ENCODE measurements at regions of chr2 and their contacts with region 1.

Region 1: DNA sequence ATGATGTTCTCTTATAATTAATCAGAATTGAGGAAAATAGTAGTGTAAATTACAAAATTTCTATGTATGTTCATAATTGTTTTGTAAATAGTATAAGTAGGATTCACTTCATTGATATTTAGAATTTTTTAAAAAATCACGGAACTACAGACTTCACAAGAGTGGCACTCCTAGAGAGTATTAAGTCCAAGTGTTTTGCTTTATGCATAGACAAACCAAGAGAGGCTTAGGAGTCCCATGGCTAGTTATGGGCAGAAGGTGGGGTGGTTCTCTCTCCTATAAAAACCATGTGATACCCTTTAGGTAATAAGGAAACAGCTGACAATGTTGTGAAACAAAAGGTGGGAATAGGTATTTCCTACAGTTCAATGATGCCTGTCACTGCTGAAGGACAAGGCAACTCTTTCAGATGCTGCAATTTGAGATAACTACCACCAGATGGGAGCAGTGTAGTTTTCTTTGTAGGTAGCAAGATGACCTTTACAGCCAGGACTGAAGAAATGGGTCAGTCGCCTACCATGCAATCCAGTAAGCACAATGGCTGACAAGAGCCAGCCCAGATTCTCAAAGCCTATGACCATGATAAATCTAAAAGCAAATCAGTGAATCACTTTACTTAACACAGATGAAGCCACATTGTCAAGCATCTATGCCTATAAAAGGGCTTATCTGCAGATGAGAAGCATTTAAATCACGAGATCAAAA is 83.9 kb downstream of the AAK1 start:
- DNase-seq: no peak
- ATAC-seq: peak; percentile 94
- H3K4me3 ChIP-seq: no peak overlapping the region
- H3K27ac ChIP-seq: no peak overlapping the region
- H3K4me1 ChIP-seq: peaks cover 9% of the 10 kb centered on the region
- H3K27me3 ChIP-seq: no peaks in the 10 kb centered on the region
- CTCF ChIP-seq: peak; percentile 74 to 85 (median 77)
- EP300 ChIP-seq: no peak
- POLR2A ChIP-seq: no peak
- RAD21 ChIP-seq: peak; percentile 93

Region 2: DNA sequence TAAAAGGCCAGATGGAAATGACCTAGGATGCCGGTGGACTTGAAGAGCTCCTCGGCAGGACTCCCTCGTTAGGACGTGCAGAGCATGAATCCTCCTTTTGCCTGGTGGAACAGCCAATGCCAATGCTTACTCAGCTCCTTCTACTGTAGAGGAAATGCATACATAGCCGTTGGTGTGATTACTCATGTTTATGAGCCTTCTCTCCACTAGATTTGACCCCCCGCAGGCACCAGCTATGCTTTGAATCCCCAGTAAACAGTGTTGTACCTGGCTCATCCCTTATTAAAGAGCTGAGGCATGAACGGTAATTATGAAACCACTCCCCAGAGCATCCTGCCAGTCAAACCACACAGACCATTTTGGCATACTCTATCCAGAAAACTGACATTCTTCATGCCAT is 373.8 kb before region 1 on chr2:
- CTCF ChIA-PET with region 1: no interaction called
- POLR2A ChIA-PET with region 1: no interaction called
- RAD21 ChIA-PET with region 1: no interaction called
- SMC1A ChIA-PET with region 1: no interaction called
- in situ Hi-C with region 1: no loop called
- intact Hi-C with region 1: no loop called
- DNase-seq: no peak
- ATAC-seq: no peak
- H3K4me3 ChIP-seq: no peak overlapping the region
- H3K27ac ChIP-seq: no peak overlapping the region
- H3K4me1 ChIP-seq: no peaks in the 10 kb centered on the region
- H3K27me3 ChIP-seq: peaks cover 2 to 3% of the 10 kb centered on the region in 2 experiments
- CTCF ChIP-seq: no peak
- EP300 ChIP-seq: no peak
- POLR2A ChIP-seq: no peak
- RAD21 ChIP-seq: no peak

Region 3: DNA sequence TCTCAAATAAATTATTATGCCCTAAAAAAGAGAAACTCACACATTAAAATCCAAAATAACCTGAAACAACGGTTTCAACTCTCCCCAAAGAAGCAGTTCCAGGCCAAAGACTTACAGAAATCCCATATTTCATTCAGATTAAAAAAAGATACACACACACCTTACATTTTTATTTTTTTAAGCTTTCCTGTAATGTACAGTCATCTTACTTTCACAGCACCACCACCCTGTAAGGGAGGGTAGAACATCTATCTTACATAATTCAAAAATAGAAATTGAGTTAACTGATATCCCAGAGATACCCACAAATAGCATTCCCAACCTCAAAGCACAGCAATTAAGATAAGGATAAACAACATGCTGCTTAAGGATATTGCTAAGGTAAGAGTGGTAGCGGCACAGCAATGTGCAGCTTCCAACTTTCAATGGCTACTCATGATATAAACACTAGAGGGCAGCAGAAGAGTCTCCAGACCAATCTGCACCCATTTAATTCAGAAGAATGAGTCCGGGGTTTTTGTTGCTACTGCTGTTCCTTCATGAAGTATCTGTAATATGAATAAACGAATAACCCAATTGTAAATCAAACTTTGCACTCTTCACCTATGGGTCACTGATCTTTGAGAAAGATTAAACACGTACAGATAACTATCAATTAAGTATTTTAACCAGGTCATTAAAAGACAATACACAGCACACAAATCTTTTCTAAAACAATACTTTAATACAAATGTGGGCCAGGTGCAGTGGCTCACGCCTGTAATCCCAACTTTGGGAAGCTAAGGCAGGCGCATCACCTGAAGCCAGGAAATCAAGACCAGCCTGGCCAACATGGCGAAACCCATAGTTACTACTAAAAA is 183.9 kb before region 1 on chr2:
- CTCF ChIA-PET with region 1: interaction called, 91 read pairs
- POLR2A ChIA-PET with region 1: interaction called, 3 read pairs
- RAD21 ChIA-PET with region 1: interaction called, 46 read pairs
- SMC1A ChIA-PET with region 1: interaction called, 48 read pairs
- in situ Hi-C with region 1: no loop called
- intact Hi-C with region 1: no loop called
- DNase-seq: no peak
- ATAC-seq: peak; percentile 90
- H3K4me3 ChIP-seq: no peak overlapping the region
- H3K27ac ChIP-seq: no peak overlapping the region
- H3K4me1 ChIP-seq: no peaks in the 10 kb centered on the region
- H3K27me3 ChIP-seq: no peaks in the 10 kb centered on the region
- CTCF ChIP-seq: peak; percentile 49 to 63 (median 62); a peak in 5 of 6 replicates
- EP300 ChIP-seq: no peak
- POLR2A ChIP-seq: no peak
- RAD21 ChIP-seq: peak; percentile 61

Region 4: GRCh38 chr2:69572641-69573040 is 13.0 kb after region 1 on chr2:
- CTCF ChIA-PET with region 1: interaction called, 176 read pairs
- POLR2A ChIA-PET with region 1: no interaction called
- RAD21 ChIA-PET with region 1: interaction called, 9 read pairs
- SMC1A ChIA-PET with region 1: interaction called, 15 read pairs
- in situ Hi-C with region 1: no loop called
- intact Hi-C with region 1: no loop called
- DNase-seq: no peak
- ATAC-seq: no peak
- H3K4me3 ChIP-seq: no peak overlapping the region
- H3K27ac ChIP-seq: no peak overlapping the region
- H3K4me1 ChIP-seq: no peaks in the 10 kb centered on the region
- H3K27me3 ChIP-seq: no peaks in the 10 kb centered on the region
- CTCF ChIP-seq: no peak
- EP300 ChIP-seq: no peak
- POLR2A ChIP-seq: no peak
- RAD21 ChIP-seq: no peak

Region 5: GRCh38 chr2:69581774-69582581 is 22.4 kb after region 1 on chr2:
- CTCF ChIA-PET with region 1: interaction called, 144 read pairs
- POLR2A ChIA-PET with region 1: interaction called, 7 read pairs
- RAD21 ChIA-PET with region 1: interaction called, 7 read pairs
- SMC1A ChIA-PET with region 1: interaction called, 30 read pairs
- in situ Hi-C with region 1: no loop called
- intact Hi-C with region 1: no loop called
- DNase-seq: peak; percentile 40
- ATAC-seq: peak; percentile 64
- H3K4me3 ChIP-seq: peak overlapping the region; percentile 44; the same call in 1 of the 2 replicates
- H3K27ac ChIP-seq: peak overlapping the region; percentile 28
- H3K4me1 ChIP-seq: peaks cover 28% of the 10 kb centered on the region
- H3K27me3 ChIP-seq: no peaks in the 10 kb centered on the region
- CTCF ChIP-seq: no peak
- EP300 ChIP-seq: no peak
- POLR2A ChIP-seq: no peak
- RAD21 ChIP-seq: no peak

Region 6: GRCh38 chr2:69704446-69704845 is 144.9 kb after region 1 on chr2:
- CTCF ChIA-PET with region 1: interaction called, 12 read pairs
- POLR2A ChIA-PET with region 1: interaction called, 12 read pairs
- RAD21 ChIA-PET with region 1: interaction called, 3 read pairs
- SMC1A ChIA-PET with region 1: interaction called, 4 read pairs
- in situ Hi-C with region 1: no loop called
- intact Hi-C with region 1: no loop called
- DNase-seq: no peak
- ATAC-seq: no peak
- H3K4me3 ChIP-seq: no peak overlapping the region
- H3K27ac ChIP-seq: no peak overlapping the region
- H3K4me1 ChIP-seq: no peaks in the 10 kb centered on the region; the same call in 1 of the 2 replicates
- H3K27me3 ChIP-seq: no peaks in the 10 kb centered on the region
- CTCF ChIP-seq: no peak
- EP300 ChIP-seq: no peak
- POLR2A ChIP-seq: no peak
- RAD21 ChIP-seq: no peak

Region 7: GRCh38 chr2:69717861-69718273 is 158.3 kb after region 1 on chr2:
- CTCF ChIA-PET with region 1: interaction called, 293 read pairs
- POLR2A ChIA-PET with region 1: interaction called, 3 read pairs
- RAD21 ChIA-PET with region 1: interaction called, 46 read pairs
- SMC1A ChIA-PET with region 1: interaction called, 64 read pairs
- in situ Hi-C with region 1: loop called (anchors 5 kb)
- intact Hi-C with region 1: loop called (anchors 1 kb)
- DNase-seq: no peak
- ATAC-seq: peak; percentile 82
- H3K4me3 ChIP-seq: no peak overlapping the region
- H3K27ac ChIP-seq: no peak overlapping the region
- H3K4me1 ChIP-seq: peaks cover 12% of the 10 kb centered on the region; the same call in 1 of the 2 replicates
- H3K27me3 ChIP-seq: no peaks in the 10 kb centered on the region
- CTCF ChIP-seq: no peak
- EP300 ChIP-seq: peak in 1 of 2 experiments; percentile 9; a peak in 1 of 4 replicates
- POLR2A ChIP-seq: no peak
- RAD21 ChIP-seq: no peak

Region 8: DNA sequence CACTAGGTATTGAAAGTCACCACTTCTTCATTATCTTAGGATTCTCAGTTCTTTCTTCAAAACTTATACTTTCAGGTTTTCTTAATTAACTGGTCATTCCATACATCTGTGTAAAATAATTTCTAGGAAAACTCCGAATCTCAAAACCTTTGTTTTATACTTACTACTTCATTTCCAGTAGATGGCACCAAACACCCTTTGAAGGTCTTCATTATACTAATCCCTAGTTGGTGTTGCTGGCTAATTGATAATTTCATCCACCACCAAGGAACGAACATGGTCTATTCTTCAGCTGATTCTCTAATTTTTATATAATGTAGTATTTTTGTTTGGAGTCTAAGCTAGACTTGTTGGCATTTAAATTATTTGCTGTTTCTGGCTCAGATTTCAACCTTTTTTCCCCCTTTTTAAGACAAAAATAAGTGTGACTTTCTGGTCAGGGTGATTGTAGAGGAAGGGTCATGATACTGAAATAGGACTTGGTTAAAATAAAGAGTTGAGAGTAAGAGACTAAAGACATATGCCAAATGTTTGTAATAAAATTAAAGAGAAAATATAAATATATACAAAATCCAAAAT is 352.5 kb after region 1 on chr2:
- CTCF ChIA-PET with region 1: no interaction called
- POLR2A ChIA-PET with region 1: no interaction called
- RAD21 ChIA-PET with region 1: no interaction called
- SMC1A ChIA-PET with region 1: no interaction called
- in situ Hi-C with region 1: no loop called
- intact Hi-C with region 1: no loop called
- DNase-seq: no peak
- ATAC-seq: no peak
- H3K4me3 ChIP-seq: no peak overlapping the region
- H3K27ac ChIP-seq: no peak overlapping the region
- H3K4me1 ChIP-seq: 0 out of 2 replicates have a peak, but pooled peaks cover 3% of the 10 kb centered on the region
- H3K27me3 ChIP-seq: no peaks in the 10 kb centered on the region
- CTCF ChIP-seq: peak; percentile 33 to 75 (median 50); a peak in 5 of 6 replicates
- EP300 ChIP-seq: no peak
- POLR2A ChIP-seq: no peak
- RAD21 ChIP-seq: peak; percentile 87

Measured in GM12878 (cell line).